ENCODE measurements at regions of chr7 and their contacts with region 1.

Region 1: DNA sequence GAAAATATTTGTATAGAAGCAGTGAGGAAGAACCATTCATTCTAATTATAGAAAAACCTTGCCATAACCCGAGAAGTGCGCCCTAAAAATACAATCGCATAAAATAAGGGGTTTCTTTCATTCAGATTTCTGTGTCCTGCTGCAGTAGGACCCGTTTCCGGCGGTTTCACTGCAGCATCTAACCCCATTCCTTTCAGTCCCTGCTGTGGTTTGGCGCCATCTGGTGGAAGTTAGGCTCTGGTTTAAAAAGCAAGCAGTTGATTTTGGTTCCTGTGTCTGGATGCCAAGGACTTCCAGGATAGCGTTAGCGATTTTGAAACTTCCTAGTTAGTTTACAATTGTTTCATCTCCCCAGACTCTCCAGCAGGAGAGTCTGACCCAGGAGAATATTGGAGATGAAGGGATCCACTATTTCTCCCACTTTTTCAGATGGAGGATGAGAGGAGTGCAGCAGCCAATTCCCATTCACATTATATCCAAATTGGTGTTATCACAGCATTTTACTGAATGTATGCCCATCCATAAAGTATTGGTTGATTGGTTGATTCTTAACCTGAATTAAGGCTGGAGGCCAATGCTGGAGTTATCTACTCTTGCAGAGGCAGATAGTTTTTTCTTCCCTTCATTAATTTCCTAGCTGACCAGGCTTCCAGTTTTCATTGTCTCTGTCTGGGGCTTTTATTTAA is 128.8 kb upstream of the CACNA2D1 start:
- DNase-seq: peak; percentile 80
- H3K4me3 ChIP-seq: peak overlapping the region in 1 of 3 experiments; percentile 37
- H3K27ac ChIP-seq: no peak overlapping the region
- H3K4me1 ChIP-seq: peaks cover 4% of the 10 kb centered on the region
- H3K27me3 ChIP-seq: no peaks in the 10 kb centered on the region
- CTCF ChIP-seq: peak; percentile 76 to 87
- POLR2A ChIP-seq: no peak

Region 2: GRCh38 chr7:82164813-82165212 is 407.5 kb before region 1 on chr7:
- CTCF ChIA-PET with region 1: interaction called, 15 read pairs
- POLR2A ChIA-PET with region 1: no interaction called
- dilution Hi-C with region 1: no loop called
- intact Hi-C with region 1: loop called (anchors 5 kb)
- DNase-seq: peak; percentile 28
- H3K4me3 ChIP-seq: no peak overlapping the region
- H3K27ac ChIP-seq: no peak overlapping the region
- H3K4me1 ChIP-seq: no peaks in the 10 kb centered on the region
- H3K27me3 ChIP-seq: no peaks in the 10 kb centered on the region
- CTCF ChIP-seq: peak; percentile 8 to 12
- POLR2A ChIP-seq: no peak

Region 3: DNA sequence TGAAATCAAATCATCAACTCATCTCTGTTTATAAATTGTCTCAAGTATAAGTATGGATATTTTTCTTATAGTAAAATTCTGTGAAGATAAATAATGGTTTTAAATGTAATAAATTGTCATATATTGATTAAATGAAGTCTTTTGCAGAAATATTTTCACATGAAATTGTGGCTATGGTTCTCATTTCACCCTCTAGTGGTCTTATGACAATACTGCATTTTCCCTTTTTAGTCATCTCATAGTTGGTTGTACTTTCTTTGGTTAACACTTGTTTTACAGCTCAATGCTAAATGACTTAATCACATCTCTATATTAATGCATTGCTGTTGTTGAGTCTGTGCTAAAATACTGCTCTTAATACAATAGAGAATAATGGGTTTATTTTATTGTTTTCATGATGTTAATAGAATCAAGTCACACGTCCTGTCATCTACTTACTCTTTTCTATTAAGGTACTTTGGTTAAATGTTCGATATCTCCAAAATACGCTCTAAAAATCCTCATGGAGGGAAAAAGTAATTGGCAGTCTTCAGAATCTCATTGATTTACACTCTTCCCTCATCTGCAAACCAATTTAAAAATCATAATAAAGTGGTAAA is 90.7 kb before region 1 on chr7:
- CTCF ChIA-PET with region 1: interaction called, 26 read pairs
- POLR2A ChIA-PET with region 1: no interaction called
- dilution Hi-C with region 1: no loop called
- intact Hi-C with region 1: no loop called
- DNase-seq: peak; percentile 47
- H3K4me3 ChIP-seq: no peak overlapping the region
- H3K27ac ChIP-seq: no peak overlapping the region
- H3K4me1 ChIP-seq: no peaks in the 10 kb centered on the region
- H3K27me3 ChIP-seq: no peaks in the 10 kb centered on the region
- CTCF ChIP-seq: peak; percentile 33 to 55
- POLR2A ChIP-seq: no peak

Region 4: DNA sequence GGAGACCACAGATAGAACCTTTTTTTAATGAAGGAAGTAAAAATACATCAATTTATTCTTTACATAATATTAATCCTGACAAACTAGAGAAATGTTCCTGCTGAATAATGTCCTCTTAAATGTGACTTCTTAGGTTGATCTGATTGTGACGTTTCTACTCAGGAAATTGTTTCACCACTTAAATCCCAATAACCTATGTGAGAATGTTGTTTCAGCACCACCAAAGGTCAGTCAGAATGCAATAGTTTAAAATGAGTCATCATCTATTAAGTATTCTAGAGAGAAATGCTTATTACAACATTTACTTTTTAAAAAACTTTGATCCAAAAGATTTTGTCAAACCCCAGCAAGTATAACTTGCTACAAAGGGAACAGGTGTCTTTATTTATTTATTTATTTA is 26.6 kb after region 1 on chr7:
- CTCF ChIA-PET with region 1: interaction called, 35 read pairs
- POLR2A ChIA-PET with region 1: no interaction called
- dilution Hi-C with region 1: no loop called
- intact Hi-C with region 1: no loop called
- DNase-seq: peak; percentile 86
- H3K4me3 ChIP-seq: no peak overlapping the region
- H3K27ac ChIP-seq: no peak overlapping the region
- H3K4me1 ChIP-seq: peaks cover 30% of the 10 kb centered on the region
- H3K27me3 ChIP-seq: no peaks in the 10 kb centered on the region
- CTCF ChIP-seq: no peak
- POLR2A ChIP-seq: no peak

Measured in endothelial cell of umbilical vein (primary cell).